ENCODE measurements at regions of chr20 and their contacts with region 1.

Region 1: DNA sequence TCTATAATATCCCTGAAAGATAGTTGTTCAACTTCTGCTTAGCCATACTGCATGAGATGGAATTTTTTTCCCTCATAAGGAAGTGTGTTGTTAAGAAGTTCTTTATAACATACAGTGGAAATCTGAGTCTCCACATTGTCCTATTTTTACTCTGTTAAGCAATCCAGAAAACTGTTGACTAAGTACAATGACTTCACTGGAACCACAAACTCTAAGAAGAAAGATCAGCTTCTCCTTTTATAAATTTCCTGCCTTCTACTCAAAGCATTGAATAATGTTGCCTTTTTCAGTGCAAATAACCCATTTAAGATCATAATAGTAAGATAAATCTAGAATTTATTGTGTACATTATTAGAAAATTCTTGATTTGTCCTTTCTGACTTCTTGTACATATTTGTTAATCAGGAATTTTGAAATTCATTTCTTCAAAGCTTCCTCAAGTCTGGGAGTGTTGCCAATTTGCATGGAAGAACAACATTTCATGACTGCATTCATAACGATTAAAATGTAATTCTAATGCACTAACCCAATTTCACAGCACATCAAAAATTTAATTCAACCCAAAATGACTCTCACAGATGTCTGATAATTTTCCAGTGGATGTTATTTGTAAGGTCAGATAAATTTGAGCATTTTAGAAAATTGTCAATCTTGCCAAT is 45.6 kb upstream of the ANKEF1 start:
- DNase-seq: no peak
- ATAC-seq: peak in 7 of 8 donors; percentile 41 to 75 (median 64)
- H3K4me3 ChIP-seq: no peak overlapping the region
- H3K27ac ChIP-seq: peak overlapping the region in 2 of 10 donors; percentile 20 to 80
- H3K4me1 ChIP-seq: peaks cover 0 to 30% (median 0%) of the 10 kb centered on the region in 9 donors
- H3K27me3 ChIP-seq: no peaks in the 10 kb centered on the region
- CTCF ChIP-seq: no peak

Region 2: DNA sequence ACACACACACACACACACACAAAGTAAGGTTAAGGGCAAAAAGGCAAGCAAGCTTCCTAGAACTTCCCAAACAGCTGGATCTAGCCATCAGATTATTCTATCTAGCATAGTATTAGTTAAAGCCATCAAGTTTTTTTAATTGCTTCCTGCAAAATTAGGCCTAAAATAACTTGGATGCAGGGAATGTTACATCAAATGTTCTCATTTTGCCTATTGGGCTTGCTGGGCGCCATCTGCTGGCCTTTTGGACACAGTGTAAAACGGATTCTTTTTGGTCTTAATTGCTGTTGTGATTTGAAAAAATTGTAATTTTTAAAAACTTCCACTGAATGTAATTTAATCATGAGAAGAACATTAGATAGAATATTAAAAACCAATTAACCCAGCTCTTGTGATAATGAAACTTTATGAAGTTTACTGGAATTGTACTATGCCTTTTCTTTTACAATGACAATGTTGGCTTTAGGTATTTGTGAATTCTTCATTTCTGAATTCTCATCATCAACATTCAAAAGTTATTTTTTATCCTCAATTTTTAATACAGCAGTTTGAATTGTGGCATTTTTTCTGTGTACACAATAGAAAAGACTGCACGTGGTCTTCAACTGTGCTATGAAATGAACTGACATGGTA is 438.0 kb after region 1 on chr20:
- intact Hi-C with region 1: loop called in 2 of 10 experiments (anchors 10 kb)
- DNase-seq: peak; percentile 39 to 46
- ATAC-seq: peak in 4 of 8 donors; percentile 50 to 64 (median 57)
- H3K4me3 ChIP-seq: no peak overlapping the region
- H3K27ac ChIP-seq: no peak overlapping the region
- H3K4me1 ChIP-seq: peaks cover 0 to 71% (median 34%) of the 10 kb centered on the region in 9 donors
- H3K27me3 ChIP-seq: no peaks in the 10 kb centered on the region
- CTCF ChIP-seq: peak; percentile 52 to 87 (median 76)

Measured in heart right ventricle (tissue), 16 donors.